Esophagus squamous epithelium (tissue), 5 donors: ENCODE measurements at regions of chr10 and their contacts with region 1.

Region 1: GRCh38 chr10:103244663-103245271 is 920 bp upstream of the RPEL1 start:
- DNase-seq: no peak
- H3K4me3 ChIP-seq: no peak overlapping the region
- H3K27ac ChIP-seq: no peak overlapping the region
- H3K4me1 ChIP-seq: peaks cover 21 to 36% (median 27%) of the 10 kb centered on the region in 3 donors
- H3K27me3 ChIP-seq: peaks cover 0 to 4% (median 0%) of the 10 kb centered on the region in 4 donors
- CTCF ChIP-seq: peak; percentile 82 to 89 (median 86)
- POLR2A ChIP-seq: no peak

Region 2: GRCh38 chr10:102917962-102918816 is 326.6 kb before region 1 on chr10 and contains the start of gene CNNM2:
- intact Hi-C with region 1: loop called (anchors 10 kb)
- DNase-seq: peak; percentile 100
- H3K4me3 ChIP-seq: peak within 1 kb of the TSS; percentile 76 to 99 (median 83)
- H3K27ac ChIP-seq: peak within 1 kb of the TSS; percentile 70 to 95 (median 90)
- H3K4me1 ChIP-seq: peaks cover 18 to 60% (median 20%) of the 10 kb centered on the region in 3 donors
- H3K27me3 ChIP-seq: peaks cover 0 to 6% (median 0%) of the 10 kb centered on the region in 4 donors
- CTCF ChIP-seq: peak in 2 of 6 experiments; percentile 14 to 52
- POLR2A ChIP-seq: peak in 2 of 4 donors; percentile 13 to 57
- total RNA-seq, gene CNNM2: 2.2 to 3.6 (median 2.6) TPM

Region 3: GRCh38 chr10:103069453-103070331 is 175.1 kb before region 1 on chr10:
- intact Hi-C with region 1: loop called (anchors 10 kb)
- DNase-seq: no peak
- H3K4me3 ChIP-seq: no peak overlapping the region
- H3K27ac ChIP-seq: no peak overlapping the region
- H3K4me1 ChIP-seq: peaks cover 0 to 13% (median 3%) of the 10 kb centered on the region in 3 donors
- H3K27me3 ChIP-seq: no peaks in the 10 kb centered on the region
- CTCF ChIP-seq: peak; percentile 64 to 80 (median 73)
- POLR2A ChIP-seq: no peak

Region 4: GRCh38 chr10:103102195-103102594 is 142.6 kb before region 1 on chr10:
- intact Hi-C with region 1: loop called (anchors 10 kb)
- DNase-seq: no peak
- H3K4me3 ChIP-seq: no peak overlapping the region
- H3K27ac ChIP-seq: no peak overlapping the region
- H3K4me1 ChIP-seq: no peaks in the 10 kb centered on the region
- H3K27me3 ChIP-seq: no peaks in the 10 kb centered on the region
- CTCF ChIP-seq: no peak
- POLR2A ChIP-seq: no peak

Region 5: DNA sequence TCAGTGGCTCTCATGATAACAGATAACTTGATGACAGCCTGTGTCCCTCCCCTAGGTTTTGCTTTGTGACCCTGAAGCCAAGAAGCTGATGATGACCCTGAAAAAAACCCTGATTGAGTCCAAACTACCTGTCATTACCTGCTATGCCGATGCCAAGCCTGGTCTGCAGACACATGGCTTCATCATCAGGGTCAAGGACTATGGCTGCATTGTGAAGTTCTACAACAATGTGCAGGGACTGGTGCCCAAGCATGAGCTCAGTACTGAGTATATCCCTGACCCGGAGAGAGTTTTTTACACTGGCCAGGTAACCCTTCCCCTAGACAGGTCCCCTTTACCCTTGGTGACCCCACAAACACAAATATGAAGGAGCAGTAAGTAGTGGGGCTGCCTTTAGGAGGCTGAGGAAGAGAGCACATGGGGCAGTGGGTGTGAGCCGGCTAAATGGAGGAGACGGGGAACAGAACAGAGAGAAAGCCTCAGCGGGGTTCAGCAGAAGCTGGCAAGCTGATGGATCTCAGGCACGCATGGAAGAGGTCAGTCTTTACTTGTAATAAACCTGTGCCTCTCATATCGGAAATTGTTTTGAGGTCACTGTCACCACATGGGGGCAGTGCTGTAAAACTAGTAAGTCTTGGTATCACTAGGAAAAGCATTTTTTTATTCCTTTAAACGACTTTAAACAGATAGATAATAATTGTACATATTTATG is 171.8 kb after region 1 on chr10:
- intact Hi-C with region 1: no loop called
- DNase-seq: peak; percentile 19
- H3K4me3 ChIP-seq: no peak overlapping the region
- H3K27ac ChIP-seq: no peak overlapping the region
- H3K4me1 ChIP-seq: no peaks in the 10 kb centered on the region
- H3K27me3 ChIP-seq: no peaks in the 10 kb centered on the region
- CTCF ChIP-seq: peak; percentile 49 to 65 (median 60)
- POLR2A ChIP-seq: no peak